Heart left ventricle (tissue), 16 donors: ENCODE measurements at regions of chr16 and their contacts with region 1.

Region 1: GRCh38 chr16:19179546-19180490 is 11.8 kb downstream of the SYT17 start:
- DNase-seq: peak; percentile 50 to 81 (median 54)
- ATAC-seq: peak; percentile 64 to 76 (median 72)
- H3K4me3 ChIP-seq: no peak overlapping the region
- H3K27ac ChIP-seq: no peak overlapping the region
- H3K4me1 ChIP-seq: peaks cover 0 to 5% (median 0%) of the 10 kb centered on the region in 12 donors
- H3K27me3 ChIP-seq: peaks cover 0 to 8% (median 0%) of the 10 kb centered on the region in 9 donors
- CTCF ChIP-seq: peak; percentile 41 to 82 (median 62)
- POLR2A ChIP-seq: no peak

Region 2: DNA sequence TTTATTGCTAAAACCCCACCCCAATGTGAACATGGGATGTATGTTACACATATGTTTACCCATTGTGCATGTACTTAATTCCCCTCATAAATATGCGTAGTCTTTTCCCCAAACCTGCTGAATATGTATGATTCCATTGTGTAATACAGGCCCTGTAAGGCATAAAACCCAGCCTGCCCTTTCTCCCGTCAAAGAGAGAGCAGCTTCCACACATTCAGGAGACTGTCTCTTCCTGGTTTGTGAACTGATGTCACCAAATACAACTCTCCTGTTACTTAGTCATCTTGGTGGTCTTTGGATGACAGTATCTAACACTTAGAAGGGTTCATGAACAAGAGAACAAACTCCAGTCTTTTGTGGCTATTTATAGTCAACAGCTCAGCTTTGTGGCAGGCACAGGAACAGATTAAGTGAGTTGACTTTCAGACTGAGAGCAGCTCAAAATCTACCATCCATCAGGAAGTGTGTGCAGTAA is 220.8 kb before region 1 on chr16:
- intact Hi-C with region 1: no loop called
- DNase-seq: no peak
- ATAC-seq: peak; percentile 62 to 82 (median 73)
- H3K4me3 ChIP-seq: no peak overlapping the region
- H3K27ac ChIP-seq: peak overlapping the region; percentile 31 to 86 (median 70)
- H3K4me1 ChIP-seq: peaks cover 0 to 19% (median 6%) of the 10 kb centered on the region in 12 donors
- H3K27me3 ChIP-seq: no peaks in the 10 kb centered on the region
- CTCF ChIP-seq: no peak
- POLR2A ChIP-seq: no peak

Region 3: GRCh38 chr16:19095654-19096053 is 84.2 kb before region 1 on chr16:
- intact Hi-C with region 1: no loop called
- DNase-seq: no peak
- ATAC-seq: no peak
- H3K4me3 ChIP-seq: no peak overlapping the region
- H3K27ac ChIP-seq: no peak overlapping the region
- H3K4me1 ChIP-seq: peaks cover 0 to 5% (median 0%) of the 10 kb centered on the region in 12 donors
- H3K27me3 ChIP-seq: no peaks in the 10 kb centered on the region
- CTCF ChIP-seq: no peak
- POLR2A ChIP-seq: no peak

Region 4: GRCh38 chr16:19366391-19366790 is 186.6 kb after region 1 on chr16:
- intact Hi-C with region 1: loop called in 1 of 10 experiments (anchors 10 kb)
- DNase-seq: no peak
- ATAC-seq: no peak
- H3K4me3 ChIP-seq: no peak overlapping the region
- H3K27ac ChIP-seq: no peak overlapping the region
- H3K4me1 ChIP-seq: no peaks in the 10 kb centered on the region
- H3K27me3 ChIP-seq: peaks cover 0 to 7% (median 0%) of the 10 kb centered on the region in 9 donors
- CTCF ChIP-seq: no peak
- POLR2A ChIP-seq: no peak

Region 5: DNA sequence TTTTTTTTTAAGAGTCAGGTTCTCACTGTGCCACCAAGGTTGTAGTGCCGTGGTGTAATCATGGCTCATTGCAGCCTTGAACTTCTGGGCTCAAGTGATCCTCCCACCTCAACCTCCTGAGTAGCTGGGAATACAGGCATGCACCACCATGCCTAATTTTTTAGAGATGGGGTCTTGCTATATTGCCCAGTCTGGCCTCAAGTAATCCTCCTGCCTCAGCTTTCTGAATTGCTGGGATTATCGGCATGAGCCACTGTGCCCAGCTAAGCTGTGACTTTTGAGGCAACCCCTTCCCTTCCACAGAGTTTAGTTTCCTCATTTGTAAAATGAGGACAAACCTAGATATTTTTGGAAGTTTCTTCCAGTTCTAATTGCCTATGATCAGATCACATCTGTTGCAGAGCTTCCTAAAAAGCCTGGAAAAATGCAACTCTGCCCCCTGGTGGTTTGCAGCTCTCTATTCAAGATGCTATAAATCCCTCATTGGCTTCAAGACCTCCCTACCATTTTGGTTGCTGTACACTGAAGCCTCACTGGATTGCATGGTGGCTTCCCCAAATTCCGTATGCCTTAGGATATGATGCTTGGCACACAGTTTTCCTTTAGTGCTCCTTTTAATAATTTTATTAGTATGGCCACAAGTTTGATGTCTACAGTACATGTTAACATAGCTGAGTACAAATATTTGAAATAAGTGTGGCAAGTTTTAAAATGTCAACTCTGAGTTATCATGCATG is 322.7 kb after region 1 on chr16:
- intact Hi-C with region 1: loop called in 1 of 10 experiments (anchors 10 kb)
- DNase-seq: peak in 4 of 5 donors; percentile 57 to 69 (median 60)
- ATAC-seq: peak in 3 of 4 donors; percentile 63 to 72 (median 65)
- H3K4me3 ChIP-seq: no peak overlapping the region
- H3K27ac ChIP-seq: no peak overlapping the region
- H3K4me1 ChIP-seq: peaks cover 0 to 12% (median 2%) of the 10 kb centered on the region in 12 donors
- H3K27me3 ChIP-seq: no peaks in the 10 kb centered on the region
- CTCF ChIP-seq: peak; percentile 55 to 79 (median 68)
- POLR2A ChIP-seq: no peak